ENCODE measurements at regions of chr10 and their contacts with region 1.

Region 1: GRCh38 chr10:28676968-28677887 is at the start of gene BAMBI:
- DNase-seq: peak; percentile 91
- H3K4me3 Mint-ChIP-seq: peak within 1 kb of the TSS; percentile 73
- H3K27ac Mint-ChIP-seq: no peak within 1 kb of the TSS
- H3K4me1 Mint-ChIP-seq: peaks cover 23% of the 10 kb centered on the region
- H3K27me3 Mint-ChIP-seq: peaks cover 53% of the 10 kb centered on the region
- total RNA-seq, gene BAMBI: 0.57 to 0.59 TPM

Region 2: GRCh38 chr10:28432210-28432676 is 245.0 kb before region 1 on chr10:
- CTCF ChIA-PET with region 1: no interaction called
- intact Hi-C with region 1: loop called (anchors 5 kb)
- DNase-seq: peak; percentile 29
- H3K4me3 Mint-ChIP-seq: peak overlapping the region; percentile 48
- H3K27ac Mint-ChIP-seq: no peak overlapping the region
- H3K4me1 Mint-ChIP-seq: no peaks in the 10 kb centered on the region
- H3K27me3 Mint-ChIP-seq: no peaks in the 10 kb centered on the region

Region 3: GRCh38 chr10:28628184-28628893 is 48.9 kb before region 1 on chr10:
- CTCF ChIA-PET with region 1: no interaction called
- intact Hi-C with region 1: loop called (anchors 5 kb)
- DNase-seq: peak; percentile 83
- H3K4me3 Mint-ChIP-seq: no peak overlapping the region
- H3K27ac Mint-ChIP-seq: no peak overlapping the region
- H3K4me1 Mint-ChIP-seq: peaks cover 4% of the 10 kb centered on the region
- H3K27me3 Mint-ChIP-seq: peaks cover 10% of the 10 kb centered on the region

Region 4: GRCh38 chr10:28879875-28880682 is 202.9 kb after region 1 on chr10:
- CTCF ChIA-PET with region 1: no interaction called
- intact Hi-C with region 1: loop called (anchors 2 kb)
- DNase-seq: no peak
- H3K4me3 Mint-ChIP-seq: no peak overlapping the region
- H3K27ac Mint-ChIP-seq: no peak overlapping the region
- H3K4me1 Mint-ChIP-seq: no peaks in the 10 kb centered on the region
- H3K27me3 Mint-ChIP-seq: peaks cover 13% of the 10 kb centered on the region

Region 5: GRCh38 chr10:28991326-28992270 is 314.4 kb after region 1 on chr10:
- CTCF ChIA-PET with region 1: interaction called, 4 read pairs
- intact Hi-C with region 1: loop called (anchors 1 kb)
- DNase-seq: peak; percentile 60
- H3K4me3 Mint-ChIP-seq: no peak overlapping the region
- H3K27ac Mint-ChIP-seq: no peak overlapping the region
- H3K4me1 Mint-ChIP-seq: no peaks in the 10 kb centered on the region
- H3K27me3 Mint-ChIP-seq: peaks cover 8% of the 10 kb centered on the region

Region 6: DNA sequence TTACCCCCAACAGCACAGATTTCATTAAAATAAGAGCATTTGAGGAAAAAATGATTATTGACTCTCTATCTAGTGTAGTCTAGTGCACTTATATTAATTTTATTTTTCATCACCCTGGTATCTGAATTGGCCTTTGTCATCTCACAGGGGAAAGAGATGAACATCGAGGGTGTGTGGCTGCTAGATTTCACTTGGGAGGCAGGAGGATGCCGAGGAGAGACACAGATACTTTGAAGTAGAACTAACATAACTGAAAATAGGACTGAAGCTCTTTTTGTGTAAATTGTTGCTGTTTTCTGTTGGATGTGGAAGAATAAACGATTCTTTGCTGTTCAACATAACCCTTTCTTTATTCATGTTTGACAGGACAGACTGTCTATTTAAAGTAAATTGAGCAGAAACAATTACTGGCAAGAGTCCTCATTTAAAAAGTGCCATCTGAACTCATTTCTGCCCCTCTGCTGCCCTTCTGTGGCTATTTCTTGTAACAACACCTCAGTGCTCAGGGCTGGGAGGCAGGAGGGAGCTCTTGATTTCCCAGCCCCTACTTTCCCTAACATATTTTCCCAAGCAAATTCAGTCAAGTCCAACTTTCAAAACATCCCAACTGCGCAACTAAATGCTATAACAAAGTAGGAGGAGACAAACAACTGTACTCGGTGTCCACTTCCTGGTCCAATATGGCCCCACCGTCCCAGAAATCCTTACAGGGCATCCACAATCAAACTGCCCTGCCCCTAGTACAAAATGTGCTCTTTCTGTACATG is 627.2 kb after region 1 on chr10:
- CTCF ChIA-PET with region 1: interaction called, 3 read pairs
- intact Hi-C with region 1: loop called (anchors 1 kb)
- DNase-seq: peak; percentile 53
- H3K4me3 Mint-ChIP-seq: peak overlapping the region; percentile 16
- H3K27ac Mint-ChIP-seq: no peak overlapping the region
- H3K4me1 Mint-ChIP-seq: peaks cover 4% of the 10 kb centered on the region
- H3K27me3 Mint-ChIP-seq: peaks cover 33% of the 10 kb centered on the region

Region 7: DNA sequence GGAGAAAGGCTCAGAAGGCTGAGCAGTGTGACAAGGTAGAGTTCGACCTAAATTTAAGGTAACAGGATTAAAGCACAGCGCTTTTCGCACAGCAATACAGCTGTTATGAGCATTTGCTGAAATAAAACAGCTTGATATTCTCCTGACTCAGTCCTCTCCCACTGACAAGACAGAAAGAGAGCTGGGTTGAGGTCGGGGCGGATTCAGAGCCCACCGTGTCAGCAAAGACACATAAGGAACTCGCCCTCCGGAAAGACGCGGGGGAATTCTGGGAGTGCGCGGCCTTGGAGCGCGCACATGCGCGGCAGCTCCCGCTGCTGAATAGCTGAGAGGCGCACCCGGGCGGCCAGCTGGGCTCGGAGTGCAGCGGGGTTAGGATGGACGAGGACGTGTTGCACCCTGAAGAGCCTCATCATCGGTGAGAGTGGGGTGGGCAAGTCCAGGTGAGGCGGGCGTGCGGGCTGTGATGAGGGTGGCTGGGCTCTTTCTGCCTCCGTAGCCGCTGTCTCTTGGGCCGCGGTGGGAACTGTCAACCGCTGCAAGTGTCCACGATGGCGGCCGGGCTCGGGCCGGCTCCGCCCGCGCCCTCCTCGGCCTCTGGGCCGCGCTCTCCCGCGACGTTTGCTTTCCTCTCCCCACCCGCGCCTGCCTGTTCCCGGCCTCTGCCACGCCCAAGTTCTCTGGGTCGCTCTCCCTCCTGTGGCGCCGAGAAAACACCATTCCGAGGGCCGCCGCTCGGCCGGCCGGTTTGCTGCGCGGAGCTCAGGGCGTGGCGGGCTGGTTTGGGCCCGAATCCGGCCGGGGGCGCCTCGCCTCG is 732.2 kb after region 1 on chr10:
- CTCF ChIA-PET with region 1: no interaction called
- intact Hi-C with region 1: loop called (anchors 10 kb)
- DNase-seq: peak; percentile 55
- H3K4me3 Mint-ChIP-seq: peak overlapping the region; percentile 89
- H3K27ac Mint-ChIP-seq: peak overlapping the region; percentile 87
- H3K4me1 Mint-ChIP-seq: peaks cover 22% of the 10 kb centered on the region
- H3K27me3 Mint-ChIP-seq: no peaks in the 10 kb centered on the region

Measured in activated naive CD4-positive, alpha-beta T cell treated with anti-CD3 and anti-CD28 coated beads for 36 hours (primary cell).